Activated naive CD4-positive, alpha-beta T cell treated with anti-CD3 and anti-CD28 coated beads for 36 hours (primary cell): ENCODE measurements at regions of chr2 and their contacts with region 1.

Region 1: GRCh38 chr2:218229239-218229638 is 12.2 kb downstream of the ARPC2 start:
- DNase-seq: peak; percentile 66
- H3K4me3 Mint-ChIP-seq: peak overlapping the region; percentile 32
- H3K27ac Mint-ChIP-seq: peak overlapping the region; percentile 87
- H3K4me1 Mint-ChIP-seq: peaks cover 81% of the 10 kb centered on the region
- H3K27me3 Mint-ChIP-seq: no peaks in the 10 kb centered on the region

Region 2: DNA sequence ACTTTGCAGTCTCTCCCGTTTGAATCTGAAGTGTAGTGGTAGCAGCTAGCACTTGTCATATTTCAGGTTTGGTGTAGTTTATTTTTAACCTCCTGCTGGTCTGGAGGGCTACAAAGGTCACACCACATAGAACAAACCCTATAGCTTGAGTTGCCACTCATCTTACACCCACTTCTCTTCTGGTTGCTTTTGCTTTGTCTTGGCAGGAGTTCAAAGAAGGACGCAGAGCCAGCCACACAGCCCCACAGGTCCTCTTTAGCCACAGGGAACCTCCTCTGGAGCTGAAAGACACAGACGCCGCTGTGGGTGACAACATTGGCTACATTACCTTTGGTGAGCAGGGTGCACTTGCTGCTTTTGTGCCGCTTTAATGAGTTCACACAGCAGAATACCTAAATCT is 16.0 kb after region 1 on chr2:
- CTCF ChIA-PET with region 1: interaction called, 23 read pairs
- intact Hi-C with region 1: no loop called
- DNase-seq: no peak
- H3K4me3 Mint-ChIP-seq: no peak overlapping the region
- H3K27ac Mint-ChIP-seq: peak overlapping the region; percentile 46
- H3K4me1 Mint-ChIP-seq: peaks cover 5% of the 10 kb centered on the region
- H3K27me3 Mint-ChIP-seq: no peaks in the 10 kb centered on the region

Region 3: GRCh38 chr2:218257390-218257981 is 28.2 kb after region 1 on chr2:
- CTCF ChIA-PET with region 1: interaction called, 7 read pairs
- intact Hi-C with region 1: loop called (anchors 1 kb)
- DNase-seq: peak; percentile 79
- H3K4me3 Mint-ChIP-seq: no peak overlapping the region
- H3K27ac Mint-ChIP-seq: peak overlapping the region; percentile 87
- H3K4me1 Mint-ChIP-seq: peaks cover 18% of the 10 kb centered on the region
- H3K27me3 Mint-ChIP-seq: no peaks in the 10 kb centered on the region

Region 4: DNA sequence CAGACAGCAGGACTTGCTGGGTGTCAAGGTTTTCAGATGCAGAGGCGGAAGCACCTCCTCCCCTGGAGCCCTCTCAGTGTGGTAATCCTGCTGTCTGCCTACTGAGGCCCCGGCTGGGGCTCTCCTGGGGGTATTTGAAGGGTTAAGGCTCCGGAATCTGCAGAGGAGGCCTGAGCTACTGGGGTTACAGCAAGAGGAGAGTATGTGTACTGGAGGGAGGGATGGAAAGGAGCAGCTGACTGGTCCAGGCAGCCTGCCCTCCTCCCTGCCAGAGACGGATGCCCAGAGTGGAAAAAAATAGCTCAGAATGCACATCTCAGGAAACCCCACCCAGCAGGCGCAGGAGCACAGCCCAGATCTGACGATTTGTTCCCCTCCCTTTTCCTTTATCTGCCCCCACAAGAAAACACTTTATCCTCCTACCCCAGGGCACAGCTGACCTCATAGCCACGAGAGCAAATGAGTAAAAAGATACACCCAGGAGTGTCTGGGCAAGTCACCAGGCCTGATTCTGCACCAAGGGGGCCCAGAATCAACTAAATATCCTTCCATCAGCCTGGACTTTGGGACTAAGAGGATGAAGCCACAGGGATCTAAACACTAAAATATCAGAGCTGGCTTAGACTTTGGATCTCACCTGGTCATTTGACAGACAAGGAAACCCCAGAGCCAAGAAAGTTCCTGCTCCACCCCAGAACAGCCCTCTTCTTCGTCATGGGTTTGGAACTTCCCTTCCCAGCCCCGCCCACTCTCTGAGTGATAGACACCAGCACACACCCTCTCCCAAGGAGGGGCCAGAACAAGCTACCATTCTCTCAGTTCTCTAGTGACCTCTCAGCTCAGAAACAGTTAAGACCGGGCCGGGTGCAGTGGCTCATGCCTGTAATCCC is 57.6 kb after region 1 on chr2:
- CTCF ChIA-PET with region 1: no interaction called
- intact Hi-C with region 1: loop called (anchors 1 kb)
- DNase-seq: peak; percentile 95
- H3K4me3 Mint-ChIP-seq: peak overlapping the region; percentile 80
- H3K27ac Mint-ChIP-seq: peak overlapping the region; percentile 98
- H3K4me1 Mint-ChIP-seq: peaks cover 73% of the 10 kb centered on the region
- H3K27me3 Mint-ChIP-seq: no peaks in the 10 kb centered on the region